HEK293 (cell line): ENCODE measurements at regions of chr1 and their contacts with region 1.

Region 1: GRCh38 chr1:110319332-110320152 is 19.6 kb upstream of the RBM15 start:
- H3K4me3 ChIP-seq: no peak overlapping the region
- H3K27ac ChIP-seq: no peak overlapping the region
- H3K4me1 ChIP-seq: no peaks in the 10 kb centered on the region
- CTCF ChIP-seq: no peak

Region 2: GRCh38 chr1:110196917-110197765 is 122.4 kb before region 1 on chr1:
- CTCF ChIA-PET with region 1: interaction called, 662 read pairs
- POLR2A ChIA-PET with region 1: no interaction called
- H3K4me3 ChIP-seq: no peak overlapping the region
- H3K27ac ChIP-seq: no peak overlapping the region
- H3K4me1 ChIP-seq: no peaks in the 10 kb centered on the region
- CTCF ChIP-seq: peak; percentile 63; the same call in 1 of the 2 replicates